K562 (cell line): ENCODE measurements at regions of chr2 and their contacts with region 1.

Region 1: DNA sequence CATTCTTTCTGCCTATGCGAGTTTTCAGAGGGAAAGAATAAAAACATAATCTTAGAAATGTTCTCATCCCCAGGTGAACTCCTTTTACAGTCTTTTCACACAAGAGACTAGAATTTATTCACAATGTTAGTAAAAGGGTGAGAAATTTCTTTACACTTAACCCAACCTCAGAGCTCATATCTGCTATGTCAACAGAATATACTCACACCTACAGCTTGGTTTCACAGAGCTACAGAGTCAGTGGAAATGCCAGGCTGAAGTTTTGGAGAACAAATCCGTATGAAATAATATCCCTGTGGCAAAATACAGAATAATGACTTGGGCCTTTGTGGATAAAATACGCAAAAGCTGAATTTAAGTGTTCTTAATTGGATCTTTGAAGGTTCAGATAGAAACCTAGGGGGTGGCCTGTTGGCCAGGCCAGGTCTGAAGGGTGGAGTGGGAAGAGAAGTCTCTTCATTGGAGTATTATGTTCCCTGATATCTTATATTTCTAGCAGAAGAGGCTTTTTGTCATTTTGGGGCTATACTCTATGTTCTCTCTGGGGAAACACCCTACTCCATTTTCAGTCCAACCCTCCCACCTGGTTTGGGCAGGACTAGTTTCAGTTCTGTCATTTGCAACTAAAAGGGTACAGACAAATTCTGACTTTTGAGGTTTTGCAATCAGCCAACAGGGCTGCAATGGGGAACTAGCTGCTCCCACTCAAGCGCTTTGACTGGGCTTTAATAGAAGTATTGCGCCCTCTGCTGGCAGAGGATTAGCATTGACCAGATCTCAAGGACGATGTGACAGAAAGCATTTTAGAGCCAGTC is 25.7 kb downstream of the FBXO48 start:
- DNase-seq: peak; percentile 67 to 95 (median 72)
- ATAC-seq: peak; percentile 94
- H3K4me3 ChIP-seq: no peak overlapping the region
- H3K27ac ChIP-seq: peak overlapping the region; percentile 53; the same call in 2 of the 3 replicates
- H3K4me1 ChIP-seq: peaks cover 4 to 29% of the 10 kb centered on the region in 2 experiments; a peak in 4 of 5 replicates
- H3K27me3 ChIP-seq: no peaks in the 10 kb centered on the region
- CTCF ChIP-seq: peak; percentile 88 to 97 (median 96)
- EP300 ChIP-seq: peak; percentile 56; the same call in 1 of the 2 replicates
- POLR2A ChIP-seq: no peak
- RAD21 ChIP-seq: peak; percentile 99

Region 2: DNA sequence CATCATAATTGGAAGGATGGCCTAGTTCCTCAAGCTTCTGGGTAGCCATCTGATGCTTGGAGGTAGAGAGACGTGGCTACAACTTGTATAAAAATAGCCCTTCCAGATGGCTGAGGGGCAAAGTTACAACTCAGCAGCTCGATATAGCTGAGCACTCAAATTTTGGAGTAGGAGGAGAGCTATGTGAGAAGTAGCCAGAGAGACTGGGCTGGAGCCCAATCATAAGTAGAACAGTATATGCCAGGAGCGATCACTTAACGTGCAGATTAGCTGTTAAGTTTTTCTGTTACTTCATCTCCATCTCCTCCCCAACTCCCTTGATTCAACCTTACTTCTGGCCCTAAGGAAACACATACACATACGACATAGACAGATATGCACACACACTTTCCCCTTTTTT is 150.5 kb before region 1 on chr2:
- CTCF ChIA-PET with region 1: no interaction called
- POLR2A ChIA-PET with region 1: interaction called, 3 read pairs
- in situ Hi-C with region 1: no loop called
- intact Hi-C with region 1: loop called (anchors 5 kb)
- DNase-seq: no peak
- ATAC-seq: peak; percentile 6; the same call in 1 of the 3 replicates
- H3K4me3 ChIP-seq: no peak overlapping the region
- H3K27ac ChIP-seq: no peak overlapping the region
- H3K4me1 ChIP-seq: peaks cover 14 to 34% of the 10 kb centered on the region in 2 experiments
- H3K27me3 ChIP-seq: no peaks in the 10 kb centered on the region
- CTCF ChIP-seq: no peak
- EP300 ChIP-seq: no peak
- POLR2A ChIP-seq: no peak
- RAD21 ChIP-seq: no peak

Region 3: DNA sequence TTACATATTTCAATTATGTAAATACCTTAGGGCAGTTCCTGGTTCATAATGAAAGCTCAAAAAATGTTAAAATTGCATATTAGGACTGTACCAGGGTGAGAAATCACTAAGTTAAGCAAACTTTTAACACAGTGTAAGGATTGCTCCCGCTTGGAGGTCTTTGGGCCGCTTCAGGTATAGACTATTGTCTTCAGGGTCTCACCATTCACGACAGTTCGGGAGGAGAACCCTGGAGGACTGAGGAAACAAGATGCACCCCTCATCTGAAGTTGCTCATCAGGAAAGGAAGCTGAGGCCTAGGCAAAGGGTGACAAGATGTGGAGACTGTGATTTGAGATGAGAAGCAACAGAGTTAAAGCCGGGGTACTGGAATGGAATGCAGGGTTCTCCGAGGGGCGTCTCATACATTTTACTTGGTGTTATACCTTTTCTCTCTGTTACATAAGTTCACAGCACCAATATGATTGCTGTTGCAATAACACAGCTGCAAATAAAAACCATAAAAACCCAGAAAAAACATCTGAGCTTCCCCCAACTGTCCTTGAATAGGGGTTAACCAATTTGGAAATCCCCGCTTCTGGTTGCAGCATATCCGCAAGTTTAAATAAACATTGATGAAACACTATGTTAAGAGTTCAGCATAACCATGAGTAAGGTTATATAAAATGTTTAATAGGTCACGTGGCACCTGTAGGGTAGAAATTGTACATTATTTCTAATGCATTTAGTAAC is 14.4 kb before region 1 on chr2:
- CTCF ChIA-PET with region 1: no interaction called
- POLR2A ChIA-PET with region 1: interaction called, 21 read pairs
- in situ Hi-C with region 1: no loop called
- intact Hi-C with region 1: no loop called
- DNase-seq: no peak
- ATAC-seq: no peak
- H3K4me3 ChIP-seq: no peak overlapping the region
- H3K27ac ChIP-seq: no peak overlapping the region
- H3K4me1 ChIP-seq: peaks cover 9 to 46% of the 10 kb centered on the region in 2 experiments
- H3K27me3 ChIP-seq: no peaks in the 10 kb centered on the region
- CTCF ChIP-seq: no peak
- EP300 ChIP-seq: no peak
- POLR2A ChIP-seq: no peak
- RAD21 ChIP-seq: no peak